ENCODE measurements at regions of chr4 and their contacts with region 1.

Region 1: DNA sequence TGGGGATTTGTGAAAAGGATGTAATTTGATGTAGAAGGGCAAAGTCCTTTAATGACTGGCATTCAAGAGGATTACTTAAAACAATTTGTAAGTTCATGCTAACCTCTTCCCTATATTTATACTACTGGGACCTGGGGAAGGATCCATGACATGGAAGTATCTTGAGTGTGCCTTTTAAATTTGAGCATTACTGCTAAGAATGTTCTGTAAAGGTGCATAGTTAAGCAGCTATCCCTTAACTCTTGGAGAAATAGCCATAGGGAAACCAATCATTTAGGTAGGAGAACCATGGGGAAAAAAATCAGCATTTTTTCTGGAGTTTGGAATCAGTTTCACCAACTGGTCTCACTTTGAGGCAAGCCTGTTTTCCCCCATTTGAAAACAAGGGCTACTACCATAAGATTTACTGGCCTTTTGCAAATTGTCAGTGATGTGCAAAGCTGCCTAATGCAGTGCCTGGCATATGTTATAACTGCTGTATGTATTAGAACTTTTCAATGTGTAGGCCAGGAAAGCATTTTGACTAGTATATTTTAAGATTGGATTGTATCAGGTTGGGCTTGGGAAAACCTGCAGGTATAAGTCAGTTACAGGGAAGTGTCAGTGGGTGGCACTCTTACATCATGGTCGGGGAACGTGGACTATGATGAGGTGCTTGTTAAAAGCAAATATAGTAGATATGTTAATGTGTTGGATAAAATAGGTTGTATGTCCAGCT is 72.1 kb downstream of the PRSS12 start:
- DNase-seq: no peak
- H3K4me3 ChIP-seq: no peak overlapping the region
- H3K27ac ChIP-seq: no peak overlapping the region
- H3K4me1 ChIP-seq: peaks cover 21 to 36% (median 27%) of the 10 kb centered on the region in 4 donors
- H3K27me3 ChIP-seq: no peaks in the 10 kb centered on the region
- CTCF ChIP-seq: peak; percentile 33 to 53 (median 49)
- EP300 ChIP-seq: no peak
- POLR2A ChIP-seq: no peak

Region 2: GRCh38 chr4:118139241-118139640 is 141.4 kb before region 1 on chr4:
- intact Hi-C with region 1: no loop called
- DNase-seq: no peak
- H3K4me3 ChIP-seq: no peak overlapping the region
- H3K27ac ChIP-seq: no peak overlapping the region
- H3K4me1 ChIP-seq: no peaks in the 10 kb centered on the region
- H3K27me3 ChIP-seq: no peaks in the 10 kb centered on the region
- CTCF ChIP-seq: no peak
- EP300 ChIP-seq: no peak
- POLR2A ChIP-seq: no peak

Region 3: GRCh38 chr4:118352843-118353533 is 72.3 kb after region 1 on chr4 and contains the start of gene PRSS12:
- intact Hi-C with region 1: loop called (anchors 5 kb)
- DNase-seq: no peak
- H3K4me3 ChIP-seq: peak within 1 kb of the TSS; percentile 52 to 67 (median 55)
- H3K27ac ChIP-seq: no peak within 1 kb of the TSS
- H3K4me1 ChIP-seq: peaks cover 5 to 20% (median 18%) of the 10 kb centered on the region in 4 donors
- H3K27me3 ChIP-seq: peaks cover 0 to 62% (median 33%) of the 10 kb centered on the region in 4 donors
- CTCF ChIP-seq: peak; percentile 50 to 78 (median 62)
- EP300 ChIP-seq: no peak
- POLR2A ChIP-seq: no peak
- total RNA-seq, gene PRSS12: under 0.01 to 1.4 (median 0.48) TPM

Region 4: DNA sequence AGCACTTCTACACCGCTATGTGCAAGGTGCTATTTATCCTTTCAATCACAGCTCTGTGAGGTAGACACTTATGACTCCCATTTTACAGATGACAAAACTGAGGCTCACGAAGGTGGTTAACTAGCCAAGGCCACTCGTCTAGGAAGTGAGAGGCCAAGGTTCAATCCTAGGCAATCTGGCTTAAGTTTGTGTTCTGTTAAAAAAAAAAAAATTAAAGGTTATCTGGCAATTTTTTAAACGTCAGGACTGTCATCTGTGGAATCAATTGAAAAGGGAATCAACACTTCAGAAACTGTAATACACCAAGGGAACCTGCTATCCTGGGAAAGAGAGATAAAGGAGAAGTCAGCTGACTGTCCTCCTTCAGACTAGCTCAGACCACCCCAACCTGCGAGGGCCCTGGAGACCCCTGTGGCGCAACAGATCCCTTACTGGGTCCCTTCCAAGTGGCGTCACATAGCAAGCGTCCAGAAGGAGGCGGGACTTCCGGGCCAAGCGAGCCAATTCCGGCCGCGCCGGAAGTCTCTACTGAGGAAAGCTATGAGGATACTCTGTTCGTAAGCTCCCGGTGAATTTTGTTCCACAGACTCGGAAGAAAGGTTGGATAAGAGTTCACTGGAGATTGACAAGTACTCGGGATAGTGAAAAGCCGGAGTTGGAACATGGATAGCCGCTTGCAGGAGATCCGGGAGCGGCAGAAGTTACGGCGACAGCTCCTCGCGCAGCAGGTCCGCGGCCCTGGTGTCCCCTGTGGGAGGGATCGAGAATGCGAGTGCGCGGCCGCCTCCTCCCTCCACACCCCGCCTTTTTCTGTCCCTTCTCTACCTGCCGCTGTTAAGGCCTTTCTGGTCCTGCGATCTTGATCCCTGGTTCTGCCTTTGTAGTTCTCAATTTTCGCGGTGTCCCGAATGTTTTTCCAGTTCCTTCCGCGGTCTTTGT is 404.5 kb after region 1 on chr4 and contains the start of gene METTL14:
- intact Hi-C with region 1: loop called (anchors 10 kb)
- DNase-seq: peak; percentile 98
- H3K4me3 ChIP-seq: peak within 1 kb of the TSS; percentile 62 to 82 (median 70)
- H3K27ac ChIP-seq: peak within 1 kb of the TSS; percentile 87 to 90 (median 88)
- H3K4me1 ChIP-seq: peaks cover 18 to 26% (median 20%) of the 10 kb centered on the region in 4 donors
- H3K27me3 ChIP-seq: no peaks in the 10 kb centered on the region
- CTCF ChIP-seq: peak in 1 of 3 experiments; percentile 23
- EP300 ChIP-seq: no peak
- POLR2A ChIP-seq: peak; percentile 8
- total RNA-seq, gene METTL14: 26.3 to 43.6 (median 29.5) TPM

Measured in esophagus muscularis mucosa (tissue), 4 donors.